Esophagus squamous epithelium (tissue), 5 donors: ENCODE measurements at regions of chr10 and their contacts with region 1.

Region 1: GRCh38 chr10:124657806-124658205 is 86.4 kb downstream of the FAM53B start:
- DNase-seq: no peak
- H3K4me3 ChIP-seq: no peak overlapping the region
- H3K27ac ChIP-seq: peak overlapping the region in 3 of 4 donors; percentile 19 to 55 (median 37)
- H3K4me1 ChIP-seq: peaks cover 20 to 78% (median 35%) of the 10 kb centered on the region in 3 donors
- H3K27me3 ChIP-seq: no peaks in the 10 kb centered on the region
- CTCF ChIP-seq: no peak
- POLR2A ChIP-seq: no peak

Region 2: GRCh38 chr10:124319926-124320401 is 337.8 kb before region 1 on chr10:
- intact Hi-C with region 1: no loop called
- DNase-seq: no peak
- H3K4me3 ChIP-seq: no peak overlapping the region
- H3K27ac ChIP-seq: no peak overlapping the region
- H3K4me1 ChIP-seq: no peaks in the 10 kb centered on the region
- H3K27me3 ChIP-seq: peaks cover 0 to 7% (median 0%) of the 10 kb centered on the region in 4 donors
- CTCF ChIP-seq: no peak
- POLR2A ChIP-seq: no peak

Region 3: DNA sequence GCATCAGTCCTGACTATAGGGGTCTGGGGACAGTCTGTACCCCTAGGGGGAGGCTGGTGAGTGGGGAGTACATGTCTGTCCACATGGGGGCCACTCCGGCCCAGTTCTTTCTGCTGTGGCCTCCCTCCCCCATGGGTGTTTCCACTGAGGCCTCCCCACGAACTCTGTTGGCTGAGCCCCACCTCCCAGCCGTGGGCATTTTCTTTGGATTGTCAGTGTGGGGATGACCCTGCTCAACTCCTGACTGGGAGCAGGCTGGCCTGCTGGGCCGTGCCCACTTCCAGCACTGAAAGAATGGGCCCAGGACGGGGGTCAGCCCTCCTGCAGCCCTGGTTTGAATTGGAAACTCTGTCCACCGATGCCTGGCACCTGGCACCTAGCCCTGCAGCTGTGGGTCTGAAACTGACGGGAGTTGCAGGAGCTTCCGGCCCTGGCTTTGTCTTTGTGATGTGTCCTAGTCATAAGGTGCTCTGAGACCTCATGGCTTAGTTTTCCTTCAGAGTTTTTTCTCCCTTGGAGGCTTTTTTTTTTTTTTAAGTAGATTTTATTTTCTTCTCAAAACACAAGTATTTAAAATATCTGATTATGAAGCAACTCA is 149.6 kb before region 1 on chr10:
- intact Hi-C with region 1: no loop called
- DNase-seq: no peak
- H3K4me3 ChIP-seq: no peak overlapping the region
- H3K27ac ChIP-seq: no peak overlapping the region
- H3K4me1 ChIP-seq: no peaks in the 10 kb centered on the region
- H3K27me3 ChIP-seq: no peaks in the 10 kb centered on the region
- CTCF ChIP-seq: no peak
- POLR2A ChIP-seq: no peak

Region 4: GRCh38 chr10:124732931-124733570 is 75.2 kb after region 1 on chr10:
- intact Hi-C with region 1: loop called (anchors 10 kb)
- DNase-seq: no peak
- H3K4me3 ChIP-seq: peak overlapping the region in 1 of 4 donors; percentile 5
- H3K27ac ChIP-seq: peak overlapping the region; percentile 75 to 95 (median 94)
- H3K4me1 ChIP-seq: peaks cover 55 to 100% (median 92%) of the 10 kb centered on the region in 3 donors
- H3K27me3 ChIP-seq: no peaks in the 10 kb centered on the region
- CTCF ChIP-seq: no peak
- POLR2A ChIP-seq: peak in 1 of 4 donors; percentile 20